Astrocyte of the cerebellum (primary cell): ENCODE measurements at regions of chr18 and their contacts with region 1.

Region 1: GRCh38 chr18:55592572-55592971 is 4.6 kb upstream of the TCF4 start:
- DNase-seq: no peak
- H3K4me3 ChIP-seq: no peak overlapping the region
- CTCF ChIP-seq: no peak

Region 2: GRCh38 chr18:55623626-55624025 is 31.1 kb after region 1 on chr18:
- in situ Hi-C with region 1: no loop called
- DNase-seq: no peak
- H3K4me3 ChIP-seq: no peak overlapping the region
- CTCF ChIP-seq: no peak

Region 3: DNA sequence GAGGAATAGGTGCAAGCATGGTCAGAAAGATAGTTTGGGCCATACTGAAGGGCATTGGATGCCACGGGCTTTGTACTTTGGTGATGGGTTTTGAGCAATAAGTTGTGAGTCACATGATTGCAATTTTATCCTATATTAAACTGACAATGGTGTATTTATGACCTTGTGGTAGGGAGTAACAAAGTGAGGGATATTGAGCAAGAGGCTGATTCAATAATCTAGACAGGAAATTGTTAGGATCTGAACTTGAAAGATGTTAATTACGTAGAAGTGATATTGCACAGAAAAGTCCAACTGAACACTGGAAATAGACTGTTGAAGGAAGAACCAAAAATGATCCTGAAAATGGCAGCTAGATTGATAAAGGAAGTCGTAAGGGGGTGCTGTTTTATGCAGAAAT is 42.0 kb after region 1 on chr18:
- in situ Hi-C with region 1: loop called (anchors 5 kb)
- DNase-seq: peak; percentile 16
- H3K4me3 ChIP-seq: no peak overlapping the region
- CTCF ChIP-seq: no peak

Region 4: GRCh38 chr18:55647331-55647730 is 54.8 kb after region 1 on chr18:
- in situ Hi-C with region 1: no loop called
- DNase-seq: no peak
- H3K4me3 ChIP-seq: no peak overlapping the region
- CTCF ChIP-seq: no peak